ENCODE measurements at regions of chr11 and their contacts with region 1.

Region 1: GRCh38 chr11:127080735-127081134 is 80.2 kb upstream of the KIRREL3 start:
- DNase-seq: no peak
- ATAC-seq: no peak
- H3K4me3 ChIP-seq: no peak overlapping the region
- H3K4me3 Mint-ChIP-seq: no peak overlapping the region
- H3K27ac ChIP-seq: no peak overlapping the region
- H3K27ac Mint-ChIP-seq: no peak overlapping the region
- H3K4me1 ChIP-seq: no peaks in the 10 kb centered on the region
- H3K4me1 Mint-ChIP-seq: no peaks in the 10 kb centered on the region
- H3K27me3 ChIP-seq: peaks cover 0 to 2% of the 10 kb centered on the region in 2 experiments
- H3K27me3 Mint-ChIP-seq: peaks cover 1 to 10% of the 10 kb centered on the region in 2 donors

Region 2: GRCh38 chr11:125404776-125405435 is 1675.8 kb before region 1 on chr11:
- CTCF ChIA-PET with region 1: no interaction called
- POLR2A ChIA-PET with region 1: interaction called in 1 of 2 experiments, 15 read pairs
- DNase-seq: peak; percentile 14 to 70 (median 51)
- ATAC-seq: peak; percentile 84 to 90 (median 88)
- H3K4me3 ChIP-seq: no peak overlapping the region
- H3K4me3 Mint-ChIP-seq: peak overlapping the region in 1 of 3 donors; percentile 15
- H3K27ac ChIP-seq: no peak overlapping the region
- H3K27ac Mint-ChIP-seq: no peak overlapping the region
- H3K4me1 ChIP-seq: peaks cover 0 to 8% of the 10 kb centered on the region in 2 experiments
- H3K4me1 Mint-ChIP-seq: peaks cover 4 to 10% (median 6%) of the 10 kb centered on the region in 3 donors
- H3K27me3 ChIP-seq: peaks cover 0 to 72% of the 10 kb centered on the region in 2 experiments
- H3K27me3 Mint-ChIP-seq: peaks cover 68 to 74% of the 10 kb centered on the region in 2 donors

Region 3: DNA sequence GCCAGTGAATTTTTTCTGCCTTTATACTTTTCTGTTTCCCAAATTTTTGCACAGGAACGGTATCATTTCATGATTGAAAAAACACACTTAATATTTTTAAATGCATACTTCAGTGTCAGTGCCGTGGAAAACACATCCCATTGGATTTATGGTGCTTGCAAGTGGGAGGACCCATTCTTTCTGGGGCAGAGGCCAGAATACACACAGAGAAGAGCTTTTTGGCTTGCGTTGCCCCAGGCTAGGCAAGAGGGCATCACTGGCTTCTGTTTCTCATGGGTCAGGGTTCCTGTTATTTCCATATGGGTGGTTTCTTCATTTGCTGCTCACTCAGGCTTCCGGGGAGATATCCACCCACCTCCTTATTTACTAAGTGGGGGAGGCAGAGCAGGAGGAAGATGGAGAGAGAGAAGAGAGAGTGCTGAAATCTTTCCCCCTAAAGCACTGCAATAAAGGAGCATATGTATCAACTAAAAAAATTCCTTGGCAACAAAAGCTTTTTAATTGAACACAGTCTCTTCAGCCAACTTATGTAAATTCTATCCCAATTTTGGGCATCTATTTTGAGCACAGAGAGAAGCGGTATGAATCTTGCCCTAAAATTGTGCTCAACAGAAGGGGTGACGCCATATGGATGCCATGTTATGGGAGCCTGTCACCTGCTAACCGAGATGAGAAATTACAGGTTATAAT is 14.2 kb before region 1 on chr11:
- CTCF ChIA-PET with region 1: no interaction called
- POLR2A ChIA-PET with region 1: no interaction called
- DNase-seq: no peak
- ATAC-seq: no peak
- H3K4me3 ChIP-seq: no peak overlapping the region
- H3K4me3 Mint-ChIP-seq: no peak overlapping the region
- H3K27ac ChIP-seq: no peak overlapping the region
- H3K27ac Mint-ChIP-seq: no peak overlapping the region
- H3K4me1 ChIP-seq: no peaks in the 10 kb centered on the region
- H3K4me1 Mint-ChIP-seq: no peaks in the 10 kb centered on the region
- H3K27me3 ChIP-seq: peaks cover 0 to 2% of the 10 kb centered on the region in 2 experiments
- H3K27me3 Mint-ChIP-seq: peaks cover 2 to 4% of the 10 kb centered on the region in 2 donors

Measured in T-cell (primary cell).